Activated naive CD4-positive, alpha-beta T cell treated with anti-CD3 and anti-CD28 coated beads, Interleukin-2, amount 10 ng/mL, durations not matched to agents 7 days and 5 days (primary cell): ENCODE measurements at regions of chr12 and their contacts with region 1.

Region 1: DNA sequence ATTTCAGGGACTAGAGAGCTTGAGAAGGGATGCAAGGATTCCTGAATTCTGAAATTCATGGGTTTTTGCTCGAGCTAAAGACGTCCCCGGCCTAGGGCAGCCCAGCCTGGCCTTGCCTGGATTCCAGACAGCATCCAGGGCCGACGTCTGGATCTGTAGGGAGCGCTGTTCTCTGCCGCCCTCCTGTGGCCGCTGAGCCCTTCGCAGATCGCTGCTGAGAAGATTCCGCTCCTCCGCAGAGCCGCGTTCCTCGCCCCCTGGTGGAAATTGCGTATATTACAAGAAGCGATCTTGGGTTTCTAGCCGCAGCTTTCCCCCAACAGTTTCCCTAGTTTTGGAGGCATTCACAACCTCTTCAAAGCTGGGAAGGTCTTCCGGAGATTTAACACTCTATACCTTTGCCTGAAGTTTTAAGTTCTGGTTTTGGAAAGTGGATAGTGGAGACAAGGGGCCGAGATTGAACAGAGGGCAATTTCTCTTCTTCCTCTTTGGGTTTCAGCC is 5.1 kb downstream of the CISTR start:
- DNase-seq: peak; percentile 93
- H3K4me3 Mint-ChIP-seq: no peak overlapping the region
- H3K27ac Mint-ChIP-seq: no peak overlapping the region
- H3K4me1 Mint-ChIP-seq: peaks cover 6% of the 10 kb centered on the region
- H3K27me3 Mint-ChIP-seq: no peaks in the 10 kb centered on the region

Region 2: GRCh38 chr12:53543539-53543938 is 203.1 kb before region 1 on chr12:
- CTCF ChIA-PET with region 1: interaction called, 47 read pairs
- DNase-seq: peak; percentile 70
- H3K4me3 Mint-ChIP-seq: no peak overlapping the region
- H3K27ac Mint-ChIP-seq: peak overlapping the region; percentile 50
- H3K4me1 Mint-ChIP-seq: peaks cover 10% of the 10 kb centered on the region
- H3K27me3 Mint-ChIP-seq: no peaks in the 10 kb centered on the region

Region 3: DNA sequence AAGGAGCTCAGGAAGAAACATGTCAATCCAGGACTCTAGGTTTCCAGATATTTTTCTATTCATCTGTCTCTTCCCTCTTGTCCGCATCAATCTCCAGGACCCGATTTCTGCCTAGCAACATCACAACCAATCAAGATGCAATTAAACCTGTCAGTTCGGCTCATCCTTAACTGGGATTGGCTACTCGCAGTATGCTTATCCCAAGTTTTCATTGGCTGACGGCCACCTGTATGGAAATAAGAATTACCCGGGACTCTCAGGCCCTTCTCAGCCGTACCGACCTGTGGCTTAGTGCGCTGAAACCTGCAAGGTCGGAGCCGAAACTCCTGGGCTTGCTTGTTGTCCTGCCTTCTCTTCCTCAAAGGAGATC is 50.4 kb before region 1 on chr12:
- CTCF ChIA-PET with region 1: interaction called, 165 read pairs
- DNase-seq: no peak
- H3K4me3 Mint-ChIP-seq: no peak overlapping the region
- H3K27ac Mint-ChIP-seq: no peak overlapping the region
- H3K4me1 Mint-ChIP-seq: peaks cover 25% of the 10 kb centered on the region
- H3K27me3 Mint-ChIP-seq: peaks cover 92% of the 10 kb centered on the region

Region 4: DNA sequence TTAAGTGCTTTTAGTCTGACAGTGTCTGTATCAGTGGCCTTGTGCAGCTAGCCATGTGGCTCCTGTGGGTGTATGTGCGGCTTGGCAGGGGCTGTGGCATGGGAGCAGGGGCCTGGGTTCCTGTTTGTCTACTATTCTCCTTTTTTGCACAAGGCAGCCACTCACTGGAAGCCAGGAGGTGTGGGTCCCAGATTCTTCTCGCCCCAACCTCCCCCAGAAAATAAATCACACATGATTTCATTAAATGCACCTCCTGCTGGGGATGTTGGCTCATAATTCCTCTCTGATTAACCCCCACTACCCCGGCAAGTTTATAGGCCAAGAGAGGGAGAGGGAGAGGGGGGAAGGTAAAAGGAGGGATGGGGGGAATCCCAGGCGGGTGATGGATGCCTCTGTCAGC is 37.0 kb before region 1 on chr12:
- CTCF ChIA-PET with region 1: interaction called, 70 read pairs
- DNase-seq: no peak
- H3K4me3 Mint-ChIP-seq: no peak overlapping the region
- H3K27ac Mint-ChIP-seq: no peak overlapping the region
- H3K4me1 Mint-ChIP-seq: no peaks in the 10 kb centered on the region
- H3K27me3 Mint-ChIP-seq: peaks cover 35% of the 10 kb centered on the region

Region 5: DNA sequence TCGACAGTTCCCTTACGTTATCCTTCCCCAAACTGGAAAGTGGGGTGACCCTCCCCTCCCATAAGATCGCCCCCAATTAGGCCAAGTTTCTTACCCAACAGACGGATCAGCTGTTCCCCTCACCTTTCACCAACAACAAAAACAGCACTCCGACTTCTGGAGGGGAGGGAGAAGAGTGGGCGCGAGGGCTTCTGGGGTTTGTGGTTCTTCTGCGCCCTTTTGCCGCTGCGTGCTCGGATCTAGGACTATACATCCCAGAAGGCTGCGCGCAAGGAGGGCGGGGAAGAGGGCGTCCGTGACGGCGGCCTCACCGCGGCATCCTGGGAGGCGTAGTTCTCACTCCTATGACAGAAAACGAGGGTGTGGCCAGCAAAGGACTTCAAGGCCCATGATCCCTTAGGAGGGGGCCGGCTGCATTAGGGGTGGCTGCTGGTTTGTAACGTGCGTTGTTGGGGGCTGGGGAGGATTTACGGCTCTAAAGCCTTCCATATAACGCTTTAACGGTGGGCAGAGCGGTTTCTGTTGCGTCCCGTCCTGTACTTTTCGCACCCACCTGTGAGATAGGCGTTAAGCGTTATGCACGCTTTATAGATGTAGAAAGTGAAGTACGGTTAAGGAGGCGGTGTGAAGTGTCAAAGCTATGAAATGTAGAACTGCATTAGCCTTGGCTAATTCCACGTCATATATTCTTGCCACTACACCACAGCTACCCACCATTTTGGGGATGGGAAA is 19.2 kb before region 1 on chr12 and contains the start of gene CALCOCO1:
- CTCF ChIA-PET with region 1: interaction called, 185 read pairs
- DNase-seq: peak; percentile 99
- H3K4me3 Mint-ChIP-seq: peak within 1 kb of the TSS; percentile 89
- H3K27ac Mint-ChIP-seq: peak within 1 kb of the TSS; percentile 91
- H3K4me1 Mint-ChIP-seq: peaks cover 27% of the 10 kb centered on the region
- H3K27me3 Mint-ChIP-seq: peaks cover 4% of the 10 kb centered on the region

Region 6: DNA sequence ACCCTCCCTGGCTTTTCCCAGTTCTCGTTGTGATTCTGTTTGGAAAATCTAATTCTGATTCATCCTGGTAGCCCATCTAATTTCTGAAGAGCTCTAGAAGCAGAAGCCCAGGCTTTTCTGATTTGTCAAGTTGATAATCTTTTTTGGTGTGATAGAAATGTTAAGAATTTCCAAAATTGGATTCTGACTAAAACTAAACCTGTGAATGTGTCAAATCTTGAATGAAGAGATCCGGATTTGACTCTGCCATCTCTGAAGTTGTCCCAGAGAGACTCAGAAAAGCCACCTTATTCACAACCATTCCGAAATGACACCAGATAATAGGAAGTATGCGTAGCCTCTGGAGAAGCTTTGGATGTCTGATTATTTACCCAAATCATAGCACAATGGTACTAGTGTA is 18.0 kb after region 1 on chr12:
- CTCF ChIA-PET with region 1: interaction called, 15 read pairs
- DNase-seq: no peak
- H3K4me3 Mint-ChIP-seq: no peak overlapping the region
- H3K27ac Mint-ChIP-seq: no peak overlapping the region
- H3K4me1 Mint-ChIP-seq: no peaks in the 10 kb centered on the region
- H3K27me3 Mint-ChIP-seq: peaks cover 68% of the 10 kb centered on the region

Region 7: GRCh38 chr12:54311051-54311450 is 564.4 kb after region 1 on chr12:
- CTCF ChIA-PET with region 1: no interaction called
- DNase-seq: no peak
- H3K4me3 Mint-ChIP-seq: no peak overlapping the region
- H3K27ac Mint-ChIP-seq: no peak overlapping the region
- H3K4me1 Mint-ChIP-seq: peaks cover 12% of the 10 kb centered on the region
- H3K27me3 Mint-ChIP-seq: peaks cover 59% of the 10 kb centered on the region